Tibial artery (tissue), 4 donors: ENCODE measurements at regions of chr10 and their contacts with region 1.

Region 1: DNA sequence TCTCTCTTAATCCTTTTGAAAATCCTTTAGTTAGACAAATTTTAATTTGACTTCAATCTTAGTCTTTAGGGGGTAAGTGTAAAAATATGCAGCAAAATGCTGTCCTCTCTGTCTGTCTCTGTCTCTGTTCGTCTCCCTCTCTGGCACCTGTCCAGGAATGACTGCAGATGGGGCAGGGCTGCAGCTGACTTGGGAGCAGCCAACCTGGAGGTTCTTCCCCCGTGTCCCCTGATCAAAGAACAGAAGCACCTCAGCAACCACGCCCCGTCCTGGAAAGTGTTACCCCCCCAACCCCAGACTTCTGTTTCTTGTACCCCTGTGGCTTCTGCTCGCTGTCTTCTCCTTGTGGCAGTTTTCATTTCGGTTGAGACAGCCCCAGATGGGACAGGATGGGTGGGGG is 141.6 kb upstream of the NPS start:
- DNase-seq: no peak
- H3K4me3 ChIP-seq: no peak overlapping the region
- H3K27ac ChIP-seq: no peak overlapping the region
- H3K4me1 ChIP-seq: peaks cover 0 to 18% (median 3%) of the 10 kb centered on the region in 4 donors
- H3K27me3 ChIP-seq: no peaks in the 10 kb centered on the region
- CTCF ChIP-seq: no peak

Region 2: DNA sequence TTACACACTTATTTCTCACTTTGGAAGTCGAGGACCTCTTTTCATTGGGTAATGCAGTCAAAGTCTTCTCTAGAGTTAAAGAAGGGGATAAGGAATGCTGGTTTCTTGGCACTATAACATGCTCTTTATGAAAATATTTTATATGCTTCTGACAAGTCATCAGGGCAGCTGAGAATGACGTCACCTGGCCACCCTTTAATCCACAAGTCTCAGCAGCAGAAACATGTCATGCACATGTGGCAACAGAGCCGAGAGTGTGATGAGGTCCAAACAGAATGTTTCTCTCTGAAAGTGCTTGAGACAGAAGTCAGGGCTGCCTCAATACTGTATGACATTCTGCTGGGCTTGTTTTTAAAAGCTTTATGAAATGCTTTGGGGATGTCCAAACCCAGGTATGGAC is 673.5 kb before region 1 on chr10:
- intact Hi-C with region 1: no loop called
- DNase-seq: no peak
- H3K4me3 ChIP-seq: no peak overlapping the region
- H3K27ac ChIP-seq: no peak overlapping the region
- H3K4me1 ChIP-seq: no peaks in the 10 kb centered on the region
- H3K27me3 ChIP-seq: no peaks in the 10 kb centered on the region
- CTCF ChIP-seq: no peak

Region 3: DNA sequence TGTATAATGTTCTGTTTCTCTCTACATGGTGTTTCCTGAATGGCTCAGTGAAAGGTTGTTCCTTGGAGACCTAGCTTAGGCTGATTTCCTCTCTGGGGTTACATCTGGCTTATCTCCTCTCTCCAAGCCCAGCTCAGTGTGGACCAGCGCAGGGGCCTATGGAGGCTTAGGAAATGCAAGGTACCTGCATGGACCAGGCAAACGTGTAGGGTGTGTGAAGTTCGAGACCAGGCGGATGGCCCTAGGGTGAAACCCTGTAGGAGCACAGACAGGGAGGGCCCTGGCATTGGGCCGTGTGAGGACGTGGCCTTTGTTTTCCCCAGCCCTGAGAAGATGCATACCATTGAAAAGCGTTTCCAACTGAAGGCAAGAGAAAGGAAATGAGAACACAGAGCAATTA is 443.4 kb before region 1 on chr10:
- intact Hi-C with region 1: no loop called
- DNase-seq: no peak
- H3K4me3 ChIP-seq: no peak overlapping the region
- H3K27ac ChIP-seq: no peak overlapping the region
- H3K4me1 ChIP-seq: peaks cover 0 to 11% (median 0%) of the 10 kb centered on the region in 4 donors
- H3K27me3 ChIP-seq: no peaks in the 10 kb centered on the region
- CTCF ChIP-seq: no peak

Region 4: GRCh38 chr10:127196230-127196954 is 211.2 kb before region 1 on chr10 and contains the start of gene INSYN2A:
- intact Hi-C with region 1: no loop called
- DNase-seq: no peak
- H3K4me3 ChIP-seq: peak within 1 kb of the TSS; percentile 40 to 51
- H3K27ac ChIP-seq: no peak within 1 kb of the TSS
- H3K4me1 ChIP-seq: peaks cover 0 to 23% (median 18%) of the 10 kb centered on the region in 4 donors
- H3K27me3 ChIP-seq: peaks cover 0 to 3% of the 10 kb centered on the region in 2 donors
- CTCF ChIP-seq: no peak

Region 5: GRCh38 chr10:127358337-127358736 is 49.2 kb before region 1 on chr10:
- intact Hi-C with region 1: loop called (anchors 2 kb)
- DNase-seq: no peak
- H3K4me3 ChIP-seq: no peak overlapping the region
- H3K27ac ChIP-seq: no peak overlapping the region
- H3K4me1 ChIP-seq: peaks cover 0 to 7% (median 0%) of the 10 kb centered on the region in 4 donors
- H3K27me3 ChIP-seq: no peaks in the 10 kb centered on the region
- CTCF ChIP-seq: no peak